ENCODE measurements at regions of chr12 and their contacts with region 1.

Region 1: GRCh38 chr12:6423267-6424007 is 21.3 kb upstream of the CD27 start:
- DNase-seq: peak; percentile 60 to 87 (median 82)
- H3K4me3 ChIP-seq: peak overlapping the region; percentile 35
- H3K4me3 Mint-ChIP-seq: peak overlapping the region in 4 of 7 donors; percentile 5 to 53 (median 24)
- H3K27ac ChIP-seq: no peak overlapping the region
- H3K27ac Mint-ChIP-seq: peak overlapping the region; percentile 41 to 90 (median 70)
- H3K4me1 ChIP-seq: peaks cover 46% of the 10 kb centered on the region
- H3K4me1 Mint-ChIP-seq: peaks cover 36 to 43% (median 40%) of the 10 kb centered on the region in 3 donors
- H3K27me3 ChIP-seq: no peaks in the 10 kb centered on the region
- H3K27me3 Mint-ChIP-seq: peaks cover 0 to 4% of the 10 kb centered on the region in 2 donors

Region 2: GRCh38 chr12:6335451-6336078 is 87.9 kb before region 1 on chr12:
- CTCF ChIA-PET with region 1: interaction called, 28 read pairs
- POLR2A ChIA-PET with region 1: interaction called, 4 read pairs
- DNase-seq: peak; percentile 77 to 92 (median 86)
- H3K4me3 ChIP-seq: peak overlapping the region; percentile 91
- H3K4me3 Mint-ChIP-seq: no peak overlapping the region
- H3K27ac ChIP-seq: peak overlapping the region; percentile 80
- H3K27ac Mint-ChIP-seq: peak overlapping the region in 1 of 8 donors; percentile 79
- H3K4me1 ChIP-seq: peaks cover 80% of the 10 kb centered on the region
- H3K4me1 Mint-ChIP-seq: peaks cover 11 to 49% (median 45%) of the 10 kb centered on the region in 3 donors
- H3K27me3 ChIP-seq: no peaks in the 10 kb centered on the region
- H3K27me3 Mint-ChIP-seq: peaks cover 0 to 4% of the 10 kb centered on the region in 2 donors

Region 3: DNA sequence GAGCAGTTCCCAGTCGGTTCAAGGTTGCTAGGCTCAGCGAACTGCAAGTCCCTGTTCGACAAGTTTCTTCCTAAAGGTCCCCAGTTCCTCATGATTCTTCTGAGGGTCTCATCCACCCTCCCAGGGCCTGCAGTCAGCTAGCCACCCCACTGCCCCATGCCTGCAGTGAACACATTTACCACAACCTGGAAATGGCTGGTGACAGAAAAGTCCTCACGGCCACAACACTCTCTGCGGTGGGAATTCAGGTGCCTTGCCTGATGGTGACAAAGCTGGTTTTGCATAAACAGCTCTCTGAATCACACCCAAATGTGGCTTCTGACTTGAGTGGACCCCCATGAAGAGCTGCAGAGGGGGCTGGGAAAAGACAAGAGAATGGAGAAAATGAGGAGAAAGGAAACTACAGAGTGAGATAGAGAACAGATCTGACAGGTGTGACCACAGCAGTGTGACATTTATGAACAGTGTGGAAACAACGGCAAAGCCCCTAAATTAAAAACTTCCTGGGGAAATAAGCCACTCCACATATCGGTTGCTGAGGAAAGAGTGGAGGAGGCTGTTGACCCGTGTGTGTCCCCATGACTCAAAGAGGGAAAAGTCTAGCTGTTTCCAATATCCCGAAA is 20.0 kb after region 1 on chr12:
- CTCF ChIA-PET with region 1: interaction called, 56 read pairs
- POLR2A ChIA-PET with region 1: interaction called, 5 read pairs
- DNase-seq: no peak
- H3K4me3 ChIP-seq: peak overlapping the region; percentile 41
- H3K4me3 Mint-ChIP-seq: peak overlapping the region; percentile 71 to 99 (median 97)
- H3K27ac ChIP-seq: no peak overlapping the region
- H3K27ac Mint-ChIP-seq: peak overlapping the region; percentile 78 to 99 (median 94)
- H3K4me1 ChIP-seq: peaks cover 32% of the 10 kb centered on the region
- H3K4me1 Mint-ChIP-seq: peaks cover 56 to 71% (median 68%) of the 10 kb centered on the region in 3 donors
- H3K27me3 ChIP-seq: no peaks in the 10 kb centered on the region
- H3K27me3 Mint-ChIP-seq: no peaks in the 10 kb centered on the region

Region 4: DNA sequence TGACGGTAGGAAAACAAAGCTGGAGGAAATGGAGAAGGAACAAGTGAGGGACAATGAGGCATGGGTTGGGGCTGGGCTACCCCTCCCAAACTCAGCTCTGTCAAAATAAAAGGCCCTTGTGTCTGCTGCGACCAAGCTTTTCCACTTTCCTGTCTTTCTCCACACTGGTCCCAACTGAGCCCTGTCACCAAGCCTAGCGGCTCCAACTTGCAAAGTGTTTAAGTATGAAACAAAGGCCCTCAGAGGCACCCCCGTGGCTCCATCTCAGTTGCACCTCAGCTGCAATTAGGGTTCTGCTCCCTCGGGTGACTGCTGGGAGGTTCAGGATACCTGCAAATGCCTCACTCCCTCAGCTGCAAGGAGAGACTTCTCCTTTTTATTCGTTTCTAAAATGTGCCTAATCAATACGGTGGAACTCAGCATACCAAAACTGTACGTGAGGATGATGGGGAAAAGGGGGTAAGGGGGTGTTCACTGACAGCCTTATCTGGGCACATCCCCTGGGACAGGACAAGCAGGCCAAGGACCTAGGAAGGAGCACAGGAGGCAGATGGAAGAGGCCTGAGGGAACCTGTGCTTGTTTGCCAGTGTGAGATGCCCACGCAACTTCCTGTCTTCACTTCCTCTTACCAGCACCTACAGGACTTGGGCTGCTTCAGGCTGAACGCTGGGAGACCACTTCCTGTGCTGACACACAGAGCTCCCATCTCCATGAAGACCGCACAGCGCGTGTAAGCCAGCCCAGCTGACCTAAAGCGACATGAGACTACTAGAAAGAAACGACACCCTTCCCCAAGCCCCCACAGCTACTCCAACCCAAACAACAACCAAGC is 38.2 kb after region 1 on chr12:
- CTCF ChIA-PET with region 1: interaction called, 95 read pairs
- POLR2A ChIA-PET with region 1: interaction called, 8 read pairs
- DNase-seq: peak; percentile 74 to 93 (median 87)
- H3K4me3 ChIP-seq: peak overlapping the region; percentile 46
- H3K4me3 Mint-ChIP-seq: peak overlapping the region; percentile 71 to 89 (median 83)
- H3K27ac ChIP-seq: peak overlapping the region; percentile 79
- H3K27ac Mint-ChIP-seq: peak overlapping the region; percentile 94 to 99 (median 99)
- H3K4me1 ChIP-seq: peaks cover 88% of the 10 kb centered on the region
- H3K4me1 Mint-ChIP-seq: peaks cover 75 to 89% (median 83%) of the 10 kb centered on the region in 3 donors
- H3K27me3 ChIP-seq: no peaks in the 10 kb centered on the region
- H3K27me3 Mint-ChIP-seq: peaks cover 0 to 2% of the 10 kb centered on the region in 2 donors

Region 5: DNA sequence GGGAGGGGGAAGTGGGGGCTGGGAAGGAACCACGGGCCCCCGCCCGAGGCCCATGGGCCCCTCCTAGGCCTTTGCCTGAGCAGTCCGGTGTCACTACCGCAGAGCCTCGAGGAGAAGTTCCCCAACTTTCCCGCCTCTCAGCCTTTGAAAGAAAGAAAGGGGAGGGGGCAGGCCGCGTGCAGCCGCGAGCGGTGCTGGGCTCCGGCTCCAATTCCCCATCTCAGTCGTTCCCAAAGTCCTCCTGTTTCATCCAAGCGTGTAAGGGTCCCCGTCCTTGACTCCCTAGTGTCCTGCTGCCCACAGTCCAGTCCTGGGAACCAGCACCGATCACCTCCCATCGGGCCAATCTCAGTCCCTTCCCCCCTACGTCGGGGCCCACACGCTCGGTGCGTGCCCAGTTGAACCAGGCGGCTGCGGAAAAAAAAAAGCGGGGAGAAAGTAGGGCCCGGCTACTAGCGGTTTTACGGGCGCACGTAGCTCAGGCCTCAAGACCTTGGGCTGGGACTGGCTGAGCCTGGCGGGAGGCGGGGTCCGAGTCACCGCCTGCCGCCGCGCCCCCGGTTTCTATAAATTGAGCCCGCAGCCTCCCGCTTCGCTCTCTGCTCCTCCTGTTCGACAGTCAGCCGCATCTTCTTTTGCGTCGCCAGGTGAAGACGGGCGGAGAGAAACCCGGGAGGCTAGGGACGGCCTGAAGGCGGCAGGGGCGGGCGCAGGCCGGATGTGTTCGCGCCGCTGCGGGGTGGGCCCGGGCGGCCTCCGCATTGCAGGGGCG is 110.7 kb after region 1 on chr12 and contains the start of gene GAPDH:
- CTCF ChIA-PET with region 1: interaction called, 107 read pairs
- POLR2A ChIA-PET with region 1: interaction called, 12 read pairs
- DNase-seq: peak; percentile 78 to 93 (median 86)
- H3K4me3 ChIP-seq: peak within 1 kb of the TSS; percentile 92
- H3K4me3 Mint-ChIP-seq: peak within 1 kb of the TSS; percentile 89 to 97 (median 93)
- H3K27ac ChIP-seq: peak within 1 kb of the TSS; percentile 95
- H3K27ac Mint-ChIP-seq: peak within 1 kb of the TSS; percentile 96 to 99 (median 98)
- H3K4me1 ChIP-seq: peaks cover 59% of the 10 kb centered on the region
- H3K4me1 Mint-ChIP-seq: peaks cover 49 to 57% (median 52%) of the 10 kb centered on the region in 3 donors
- H3K27me3 ChIP-seq: no peaks in the 10 kb centered on the region
- H3K27me3 Mint-ChIP-seq: peaks cover 0 to 5% of the 10 kb centered on the region in 2 donors
- total RNA-seq, gene GAPDH: 7,182 to 7,238 TPM

Region 6: GRCh38 chr12:7966563-7966962 is 1543.1 kb after region 1 on chr12:
- CTCF ChIA-PET with region 1: no interaction called
- POLR2A ChIA-PET with region 1: no interaction called
- DNase-seq: no peak
- H3K4me3 ChIP-seq: no peak overlapping the region
- H3K4me3 Mint-ChIP-seq: peak overlapping the region in 1 of 7 donors; percentile 59
- H3K27ac ChIP-seq: no peak overlapping the region
- H3K27ac Mint-ChIP-seq: no peak overlapping the region
- H3K4me1 ChIP-seq: peaks cover 15% of the 10 kb centered on the region
- H3K4me1 Mint-ChIP-seq: peaks cover 18 to 30% (median 20%) of the 10 kb centered on the region in 3 donors
- H3K27me3 ChIP-seq: no peaks in the 10 kb centered on the region
- H3K27me3 Mint-ChIP-seq: peaks cover 0 to 3% of the 10 kb centered on the region in 2 donors